PC-9 (cell line): ENCODE measurements at regions of chr13 and their contacts with region 1.

Region 1: DNA sequence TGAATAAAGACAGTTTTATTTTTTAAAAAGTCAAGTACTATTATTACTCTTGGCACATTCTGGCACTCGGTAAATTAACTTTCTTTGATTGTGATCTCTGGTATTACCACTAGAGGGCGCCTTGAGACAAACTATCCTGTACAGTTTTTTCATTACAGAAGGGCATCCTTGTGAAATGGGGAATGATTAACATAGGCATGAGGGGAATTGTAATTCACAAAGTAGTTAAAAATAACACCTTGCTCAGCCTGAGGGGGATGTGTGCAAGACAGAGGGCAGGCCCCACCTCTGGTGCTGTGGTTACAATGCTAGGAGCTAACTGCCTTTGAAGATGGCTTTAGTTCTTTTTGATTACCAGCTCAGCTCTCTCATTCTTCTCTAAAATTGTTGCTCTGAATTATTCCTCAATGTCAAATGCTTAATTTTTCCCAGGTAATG is 24.2 kb upstream of the C1QTNF9B start:
- DNase-seq: peak; percentile 6 to 43
- H3K4me3 ChIP-seq: no peak overlapping the region
- H3K27ac ChIP-seq: no peak overlapping the region
- H3K4me1 ChIP-seq: no peaks in the 10 kb centered on the region
- H3K27me3 ChIP-seq: peaks cover 7% of the 10 kb centered on the region; the same call in 1 of the 2 replicates
- CTCF ChIP-seq: peak; percentile 88

Region 2: GRCh38 chr13:23960566-23961156 is 39.2 kb after region 1 on chr13:
- CTCF ChIA-PET with region 1: interaction called, 4 read pairs
- POLR2A ChIA-PET with region 1: interaction called, 7 read pairs
- intact Hi-C with region 1: loop called (anchors 1 kb)
- DNase-seq: peak; percentile 7 to 40
- H3K4me3 ChIP-seq: no peak overlapping the region
- H3K27ac ChIP-seq: no peak overlapping the region
- H3K4me1 ChIP-seq: peaks cover 11% of the 10 kb centered on the region
- H3K27me3 ChIP-seq: no peaks in the 10 kb centered on the region
- CTCF ChIP-seq: peak; percentile 81